ENCODE measurements at regions of chr5 and their contacts with region 1.

Region 1: GRCh38 chr5:179526978-179527377 is 23.4 kb upstream of the RUFY1 start:
- DNase-seq: no peak
- ATAC-seq: no peak
- H3K4me3 ChIP-seq: no peak overlapping the region
- H3K27ac ChIP-seq: no peak overlapping the region
- H3K4me1 ChIP-seq: no peaks in the 10 kb centered on the region
- H3K27me3 ChIP-seq: peaks cover 5% of the 10 kb centered on the region
- CTCF ChIP-seq: no peak
- POLR2A ChIP-seq: no peak
- RAD21 ChIP-seq: no peak

Region 2: GRCh38 chr5:179217956-179218942 is 308.7 kb before region 1 on chr5:
- CTCF ChIA-PET with region 1: no interaction called
- POLR2A ChIA-PET with region 1: no interaction called
- dilution Hi-C with region 1: no loop called
- in situ Hi-C with region 1: no loop called
- intact Hi-C with region 1: no loop called
- DNase-seq: no peak
- ATAC-seq: no peak
- H3K4me3 ChIP-seq: no peak overlapping the region
- H3K27ac ChIP-seq: no peak overlapping the region
- H3K4me1 ChIP-seq: peaks cover 8% of the 10 kb centered on the region
- H3K27me3 ChIP-seq: no peaks in the 10 kb centered on the region
- CTCF ChIP-seq: no peak
- POLR2A ChIP-seq: no peak
- RAD21 ChIP-seq: no peak

Region 3: GRCh38 chr5:179608131-179608581 is 81.2 kb after region 1 on chr5:
- CTCF ChIA-PET with region 1: no interaction called
- POLR2A ChIA-PET with region 1: no interaction called
- dilution Hi-C with region 1: no loop called
- in situ Hi-C with region 1: no loop called
- intact Hi-C with region 1: no loop called
- DNase-seq: no peak
- ATAC-seq: no peak; the same call in 1 of the 2 replicates
- H3K4me3 ChIP-seq: no peak overlapping the region
- H3K27ac ChIP-seq: no peak overlapping the region
- H3K4me1 ChIP-seq: peaks cover 8% of the 10 kb centered on the region
- H3K27me3 ChIP-seq: no peaks in the 10 kb centered on the region
- CTCF ChIP-seq: no peak
- POLR2A ChIP-seq: no peak; the same call in 1 of the 2 replicates
- RAD21 ChIP-seq: no peak

Region 4: DNA sequence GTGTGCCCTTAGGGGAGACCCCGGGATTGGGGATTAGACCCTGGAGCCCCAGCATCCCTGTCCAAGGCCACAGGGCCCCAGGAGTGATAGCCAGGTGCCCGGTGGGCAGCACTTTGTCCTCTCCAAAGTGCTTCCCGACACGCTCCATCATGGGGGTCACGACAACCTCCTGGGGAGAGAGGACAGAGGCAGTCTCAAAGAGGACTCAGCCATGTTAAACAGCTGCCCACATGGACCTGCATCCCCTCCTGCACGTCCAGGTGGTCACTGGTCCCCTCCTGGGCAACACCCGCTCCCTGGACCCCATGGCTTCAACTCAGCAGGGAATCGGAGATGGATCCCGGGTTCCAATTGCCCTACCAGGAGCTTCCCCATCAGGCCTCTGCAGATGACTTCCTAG is 116.6 kb after region 1 on chr5:
- CTCF ChIA-PET with region 1: no interaction called
- POLR2A ChIA-PET with region 1: no interaction called
- dilution Hi-C with region 1: no loop called
- in situ Hi-C with region 1: no loop called
- intact Hi-C with region 1: loop called (anchors 5 kb)
- DNase-seq: no peak
- ATAC-seq: no peak
- H3K4me3 ChIP-seq: no peak overlapping the region
- H3K27ac ChIP-seq: no peak overlapping the region
- H3K4me1 ChIP-seq: no peaks in the 10 kb centered on the region
- H3K27me3 ChIP-seq: peaks cover 15% of the 10 kb centered on the region
- CTCF ChIP-seq: no peak
- POLR2A ChIP-seq: no peak
- RAD21 ChIP-seq: no peak